HEK293 (cell line): ENCODE measurements at regions of chr22 and their contacts with region 1.

Region 1: DNA sequence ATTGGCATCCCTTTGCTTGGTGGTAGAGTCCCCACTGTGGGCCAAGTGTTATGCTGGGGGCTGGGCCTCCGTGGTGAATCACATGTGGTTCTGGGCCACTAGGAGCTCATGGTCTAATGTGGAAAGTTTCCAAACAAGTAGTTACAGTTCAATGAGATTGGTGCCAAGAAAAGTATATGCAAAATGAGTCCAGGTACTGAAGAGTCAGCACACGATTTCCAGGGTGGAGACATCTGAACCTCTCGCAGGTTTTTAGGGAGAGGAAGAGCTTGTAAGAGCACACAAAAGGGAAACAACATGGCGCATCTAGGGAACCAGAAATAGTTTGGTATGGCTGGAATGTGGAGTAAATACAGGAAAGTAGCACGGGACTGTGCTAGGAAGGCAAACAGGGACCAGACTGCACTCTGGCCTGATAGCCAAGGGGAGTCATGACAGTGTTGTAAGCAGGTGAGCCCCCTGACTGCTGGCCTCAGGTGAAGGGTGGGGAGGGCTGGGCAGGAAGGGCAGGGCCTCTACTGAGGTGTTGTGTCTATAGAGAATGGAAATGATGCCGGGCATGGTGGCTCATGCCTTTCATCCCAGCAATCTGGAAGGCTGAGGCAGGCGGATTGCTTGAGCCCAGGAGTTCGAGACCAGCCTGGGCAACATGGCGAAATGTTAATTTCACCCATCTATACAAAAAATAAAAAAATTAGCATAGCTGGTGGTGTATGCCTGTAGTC is 12.6 kb downstream of the POLR2F start:
- H3K4me3 ChIP-seq: no peak overlapping the region
- H3K27ac ChIP-seq: no peak overlapping the region
- H3K4me1 ChIP-seq: no peaks in the 10 kb centered on the region
- CTCF ChIP-seq: no peak

Region 2: DNA sequence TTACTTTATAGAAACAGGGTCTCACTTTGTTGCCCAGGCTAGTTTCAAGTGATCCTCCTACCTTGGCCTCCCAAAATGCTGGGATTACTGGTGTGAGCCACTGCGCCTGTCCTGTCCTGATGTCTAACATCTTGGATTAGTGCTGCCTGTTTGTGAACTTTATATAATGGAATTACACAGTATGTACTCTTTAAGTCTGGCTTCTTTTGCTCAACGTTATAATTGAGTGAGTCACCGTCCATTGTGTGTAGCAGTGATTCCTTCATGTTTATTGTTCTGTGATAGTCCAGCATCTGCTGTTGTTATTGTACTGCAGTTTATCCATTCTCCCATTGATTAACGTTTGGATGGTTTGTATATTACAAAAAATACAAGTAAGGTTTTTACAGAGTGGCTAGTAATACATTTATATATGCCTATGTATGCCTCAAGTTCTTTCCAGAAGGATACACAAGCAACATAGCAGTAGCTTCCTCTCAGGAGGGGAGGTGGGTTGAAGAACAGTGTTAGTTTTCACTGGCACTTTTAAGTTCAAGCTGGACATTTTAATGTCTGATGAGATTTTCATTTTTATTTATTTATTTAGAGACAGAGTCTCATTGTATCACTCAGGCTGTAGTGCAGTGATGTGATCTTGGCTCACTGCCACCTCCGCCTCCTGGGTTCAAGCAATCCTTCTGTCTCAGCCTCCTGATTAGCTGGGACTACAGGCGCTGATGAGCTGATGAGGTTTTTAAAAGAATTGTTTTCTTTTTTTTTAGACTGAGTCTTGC is 85.2 kb before region 1 on chr22:
- CTCF ChIA-PET with region 1: interaction called, 10 read pairs
- POLR2A ChIA-PET with region 1: interaction called, 3 read pairs
- H3K4me3 ChIP-seq: no peak overlapping the region
- H3K27ac ChIP-seq: no peak overlapping the region
- H3K4me1 ChIP-seq: 0 out of 2 replicates have a peak, but pooled peaks cover 3% of the 10 kb centered on the region
- CTCF ChIP-seq: no peak

Region 3: GRCh38 chr22:37933711-37934376 is 32.3 kb before region 1 on chr22:
- CTCF ChIA-PET with region 1: interaction called, 17 read pairs
- POLR2A ChIA-PET with region 1: interaction called, 5 read pairs
- H3K4me3 ChIP-seq: no peak overlapping the region
- H3K27ac ChIP-seq: peak overlapping the region; percentile 67
- H3K4me1 ChIP-seq: peaks cover 6% of the 10 kb centered on the region
- CTCF ChIP-seq: peak; percentile 98

Region 4: DNA sequence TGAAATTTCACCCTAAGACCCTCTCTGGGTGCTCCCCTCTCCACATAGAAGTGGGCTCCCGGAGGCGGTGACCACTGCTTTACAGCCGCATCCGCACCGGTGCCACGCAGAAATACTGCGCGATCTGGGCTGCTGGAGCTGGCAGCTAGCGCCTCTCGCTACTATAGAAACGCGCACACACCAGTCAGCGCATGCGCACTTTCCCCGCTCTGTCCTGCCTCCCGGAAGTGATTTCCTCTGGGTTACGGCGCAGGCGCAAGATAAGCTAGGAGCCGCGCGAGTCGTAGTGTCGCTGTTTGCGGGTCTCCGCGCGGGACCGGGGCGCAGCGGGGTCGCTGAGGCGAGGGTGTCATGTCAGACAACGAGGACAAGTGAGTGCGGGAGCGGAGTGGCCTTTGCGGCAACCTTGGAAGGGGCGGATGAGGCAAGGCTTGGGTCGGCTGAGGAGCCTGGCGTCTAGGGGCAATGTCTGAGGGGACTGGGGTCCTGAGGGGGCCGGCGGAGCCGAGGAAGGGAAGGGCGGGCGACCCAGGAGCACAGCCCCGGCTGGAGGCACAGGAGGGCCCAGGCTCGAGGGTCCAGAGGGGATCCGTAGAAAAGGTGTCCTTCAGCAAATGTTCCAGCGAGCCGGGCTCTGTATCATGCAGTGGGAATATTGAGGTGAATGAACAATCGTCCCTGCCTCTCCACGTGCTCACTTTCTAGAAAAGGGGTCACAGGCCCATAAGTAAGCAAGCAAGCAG is 12.5 kb before region 1 on chr22 and contains the starts of genes C22orf23 and POLR2F:
- CTCF ChIA-PET with region 1: interaction called, 21 read pairs
- POLR2A ChIA-PET with region 1: interaction called, 4 read pairs
- H3K4me3 ChIP-seq: peak within 1 kb of the TSS; percentile 99
- H3K27ac ChIP-seq: peak within 1 kb of the TSS; percentile 47; the same call in 1 of the 2 replicates
- H3K4me1 ChIP-seq: 0 out of 2 replicates have a peak, but pooled peaks cover 4% of the 10 kb centered on the region
- CTCF ChIP-seq: peak; percentile 74

Region 5: DNA sequence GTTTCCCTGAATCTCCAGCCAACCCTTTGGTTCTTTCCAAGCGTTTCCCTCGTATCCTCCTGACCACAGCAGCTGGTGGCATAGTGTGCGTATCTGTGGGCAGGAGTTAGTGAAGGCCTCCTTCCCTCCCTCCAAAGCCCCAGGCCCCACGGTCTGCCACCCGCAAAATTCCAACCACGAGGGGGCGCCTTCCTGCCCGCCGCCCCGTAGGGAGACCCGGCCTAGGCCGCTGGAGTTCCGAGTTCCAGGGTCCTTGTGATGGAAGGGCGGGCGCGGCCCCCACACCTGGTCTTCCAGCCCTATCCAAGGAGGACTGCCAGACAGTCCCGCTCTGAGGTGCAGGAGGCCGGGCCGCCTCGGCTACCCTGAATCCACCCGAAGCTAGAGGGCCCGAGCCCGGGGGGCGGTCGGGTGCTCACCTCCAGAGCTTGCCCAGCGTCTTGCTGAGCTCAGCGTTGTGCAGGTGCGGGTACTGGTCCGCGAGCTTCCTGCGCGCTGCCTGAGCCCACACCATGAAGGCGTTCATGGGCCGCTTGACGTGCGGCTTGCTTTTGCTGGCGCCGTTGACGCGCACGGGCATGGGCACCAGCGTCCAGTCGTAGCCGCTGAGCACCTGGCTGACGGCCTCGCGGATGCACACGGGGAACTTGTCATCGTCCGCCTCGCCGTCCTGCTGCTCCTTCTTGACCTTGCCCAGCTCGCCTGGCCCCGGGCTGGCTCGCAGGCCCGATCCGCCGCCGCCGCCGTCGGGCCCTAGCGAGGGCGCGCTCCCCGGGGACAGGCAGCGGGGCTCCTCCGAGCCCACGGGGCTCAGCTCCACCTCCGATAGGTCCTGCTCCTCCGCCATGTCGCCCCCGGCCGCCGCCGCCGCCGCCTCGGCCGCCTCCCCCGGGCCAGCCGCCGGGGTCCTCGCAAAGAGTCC is 17.1 kb after region 1 on chr22:
- CTCF ChIA-PET with region 1: interaction called, 22 read pairs
- POLR2A ChIA-PET with region 1: no interaction called
- H3K4me3 ChIP-seq: no peak overlapping the region
- H3K27ac ChIP-seq: no peak overlapping the region
- H3K4me1 ChIP-seq: no peaks in the 10 kb centered on the region
- CTCF ChIP-seq: no peak